Caco-2 (cell line): ENCODE measurements at regions of chr18 and their contacts with region 1.

Region 1: DNA sequence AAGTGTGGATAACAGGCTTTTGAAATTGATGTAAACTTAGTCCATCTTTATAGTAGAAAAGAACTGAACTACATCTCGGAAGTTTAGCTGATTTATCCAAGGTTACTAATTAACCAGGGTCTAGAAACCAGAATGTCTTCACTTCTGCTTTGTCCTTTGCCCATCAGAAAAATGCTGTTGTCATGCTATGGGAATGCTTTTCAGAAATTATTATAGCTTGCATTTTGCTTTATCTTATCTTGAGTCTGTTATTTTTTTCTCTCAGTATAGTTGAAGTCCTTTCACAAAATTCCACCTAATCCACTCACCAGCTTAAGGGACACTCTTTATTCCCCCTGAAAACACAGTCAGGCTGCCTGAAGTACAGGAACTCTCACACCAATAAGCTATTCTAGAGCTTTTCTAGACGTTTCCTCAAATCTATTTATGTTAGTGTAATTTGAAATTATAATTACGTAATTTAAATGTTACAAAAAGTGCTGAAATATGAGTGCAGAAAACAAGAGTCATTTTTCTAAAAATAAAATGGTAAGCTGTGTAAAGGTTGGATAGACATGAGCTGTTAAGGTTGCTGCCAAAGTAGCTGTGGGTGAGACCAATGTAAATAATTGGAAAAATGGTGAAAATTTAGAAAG is 456.3 kb downstream of the TGIF1 start:
- DNase-seq: peak in 1 of 2 experiments; percentile 53
- H3K4me3 ChIP-seq: no peak overlapping the region
- H3K4me3 Mint-ChIP-seq: peak overlapping the region; percentile 33
- H3K27ac Mint-ChIP-seq: peak overlapping the region; percentile 69
- H3K4me1 ChIP-seq: peaks cover 28% of the 10 kb centered on the region
- H3K4me1 Mint-ChIP-seq: peaks cover 15% of the 10 kb centered on the region
- H3K27me3 ChIP-seq: no peaks in the 10 kb centered on the region
- H3K27me3 Mint-ChIP-seq: peaks cover under 1% of the 10 kb centered on the region
- CTCF ChIP-seq: no peak

Region 2: DNA sequence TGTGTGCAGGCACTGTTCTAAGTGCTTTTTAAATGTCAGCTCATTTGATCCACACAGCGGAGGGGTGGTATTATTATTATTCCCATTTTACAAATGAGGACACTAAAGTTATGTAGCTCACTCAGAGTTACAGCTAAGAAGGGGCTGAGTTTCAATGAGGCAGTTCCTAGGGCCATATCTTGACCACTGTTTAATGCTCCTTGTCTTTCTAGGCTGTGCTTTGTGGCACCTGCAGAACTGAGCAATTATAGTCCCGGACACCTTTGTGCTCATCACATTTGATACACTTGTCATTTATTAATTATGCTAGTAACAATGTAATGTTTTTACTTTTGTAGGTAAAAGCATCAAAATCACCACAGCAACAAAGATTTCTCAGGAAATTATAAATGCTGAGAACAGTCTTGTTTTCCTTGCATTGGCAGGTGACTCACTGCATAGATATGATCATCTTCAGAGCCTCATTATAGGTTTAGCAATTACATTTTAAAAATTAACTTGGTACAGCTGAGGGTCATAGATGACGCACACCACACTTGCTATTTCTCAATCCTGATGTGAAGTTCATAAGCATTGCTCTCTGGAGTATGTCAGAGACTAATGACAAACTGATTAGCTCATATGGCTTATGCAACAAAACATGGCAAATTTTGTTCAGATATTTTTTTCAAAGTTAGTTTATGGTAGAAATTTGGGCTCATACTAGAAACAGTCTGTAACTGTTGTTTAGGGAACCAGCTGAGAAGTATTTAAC is 89.4 kb before region 1 on chr18:
- CTCF ChIA-PET with region 1: no interaction called
- POLR2A ChIA-PET with region 1: no interaction called
- intact Hi-C with region 1: loop called (anchors 1 kb)
- DNase-seq: peak in 1 of 2 experiments; percentile 60
- H3K4me3 ChIP-seq: no peak overlapping the region
- H3K4me3 Mint-ChIP-seq: no peak overlapping the region
- H3K27ac Mint-ChIP-seq: peak overlapping the region; percentile 75
- H3K4me1 ChIP-seq: peaks cover 15% of the 10 kb centered on the region
- H3K4me1 Mint-ChIP-seq: peaks cover 22% of the 10 kb centered on the region
- H3K27me3 ChIP-seq: no peaks in the 10 kb centered on the region
- H3K27me3 Mint-ChIP-seq: no peaks in the 10 kb centered on the region
- CTCF ChIP-seq: no peak

Region 3: GRCh38 chr18:3885209-3885792 is 20.9 kb before region 1 on chr18:
- CTCF ChIA-PET with region 1: interaction called, 3 read pairs
- POLR2A ChIA-PET with region 1: no interaction called
- intact Hi-C with region 1: loop called (anchors 1 kb)
- DNase-seq: peak in 1 of 2 experiments; percentile 25
- H3K4me3 ChIP-seq: no peak overlapping the region
- H3K4me3 Mint-ChIP-seq: no peak overlapping the region
- H3K27ac Mint-ChIP-seq: no peak overlapping the region
- H3K4me1 ChIP-seq: peaks cover 19% of the 10 kb centered on the region
- H3K4me1 Mint-ChIP-seq: peaks cover 20% of the 10 kb centered on the region
- H3K27me3 ChIP-seq: no peaks in the 10 kb centered on the region
- H3K27me3 Mint-ChIP-seq: no peaks in the 10 kb centered on the region
- CTCF ChIP-seq: peak; percentile 33 to 48

Region 4: DNA sequence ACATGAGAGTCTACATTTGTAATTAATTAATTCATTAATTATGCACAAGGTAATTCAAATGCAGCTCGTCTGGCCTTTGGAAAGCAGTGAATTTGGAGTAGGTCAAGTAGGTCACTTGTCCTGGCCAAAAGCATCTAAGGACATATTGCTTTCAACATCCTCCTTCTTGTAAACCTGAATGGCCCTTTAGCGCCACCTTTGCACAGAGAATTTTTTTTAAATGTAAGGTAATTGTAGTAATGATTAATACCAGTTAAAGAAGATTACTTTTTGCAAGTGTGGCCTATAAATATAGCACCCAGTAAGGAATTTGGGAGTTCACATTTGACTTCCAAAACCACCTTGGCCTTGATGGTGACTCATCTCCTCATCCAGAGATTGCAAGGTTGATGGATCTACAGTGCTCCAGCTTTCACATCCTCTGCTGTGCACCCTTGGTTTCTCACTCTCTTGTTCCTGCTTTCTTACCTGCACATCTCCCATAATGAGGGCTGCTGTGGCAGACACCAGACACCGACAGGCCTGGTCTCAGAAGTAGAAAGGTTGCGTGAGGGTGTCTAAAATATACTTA is 25.4 kb after region 1 on chr18:
- CTCF ChIA-PET with region 1: no interaction called
- POLR2A ChIA-PET with region 1: no interaction called
- intact Hi-C with region 1: no loop called
- DNase-seq: no peak
- H3K4me3 ChIP-seq: no peak overlapping the region
- H3K4me3 Mint-ChIP-seq: no peak overlapping the region
- H3K27ac Mint-ChIP-seq: no peak overlapping the region
- H3K4me1 ChIP-seq: no peaks in the 10 kb centered on the region
- H3K4me1 Mint-ChIP-seq: no peaks in the 10 kb centered on the region
- H3K27me3 ChIP-seq: no peaks in the 10 kb centered on the region
- H3K27me3 Mint-ChIP-seq: no peaks in the 10 kb centered on the region
- CTCF ChIP-seq: no peak

Region 5: GRCh38 chr18:4040391-4041092 is 134.3 kb after region 1 on chr18:
- CTCF ChIA-PET with region 1: no interaction called
- POLR2A ChIA-PET with region 1: no interaction called
- intact Hi-C with region 1: loop called (anchors 1 kb)
- DNase-seq: no peak
- H3K4me3 ChIP-seq: no peak overlapping the region
- H3K4me3 Mint-ChIP-seq: no peak overlapping the region
- H3K27ac Mint-ChIP-seq: peak overlapping the region; percentile 77
- H3K4me1 ChIP-seq: peaks cover 27% of the 10 kb centered on the region
- H3K4me1 Mint-ChIP-seq: peaks cover 18% of the 10 kb centered on the region
- H3K27me3 ChIP-seq: no peaks in the 10 kb centered on the region
- H3K27me3 Mint-ChIP-seq: no peaks in the 10 kb centered on the region
- CTCF ChIP-seq: no peak